ENCODE measurements at regions of chr9 and their contacts with region 1.

Region 1: DNA sequence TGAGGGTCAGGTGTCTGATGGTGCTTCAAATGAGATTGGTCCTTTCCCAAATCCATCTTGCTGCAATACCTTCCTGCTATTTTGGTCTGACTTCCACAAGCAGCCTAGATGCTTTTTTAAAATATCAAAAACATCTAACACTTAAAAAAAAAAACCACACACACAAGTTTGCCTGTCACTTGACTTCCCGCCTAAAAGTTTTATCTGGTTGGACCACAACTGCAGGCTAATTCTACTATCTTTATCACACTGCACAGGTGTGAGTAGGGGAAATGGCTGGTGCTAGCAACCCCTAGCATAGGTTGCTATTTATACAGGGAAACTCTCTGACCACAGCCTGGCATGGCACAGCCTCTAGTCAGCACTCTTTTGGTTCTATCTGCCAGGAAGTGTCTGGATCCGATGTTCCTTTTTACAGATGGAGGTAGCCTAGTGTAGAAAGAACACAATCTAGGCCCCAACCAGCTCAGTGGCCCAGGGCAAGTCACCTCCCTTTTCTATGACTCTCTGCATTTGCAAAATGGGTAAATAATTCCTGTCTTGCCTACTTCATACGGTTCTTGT is at the start of gene HEMGN:
- DNase-seq: no peak
- CTCF ChIP-seq: no peak

Region 2: DNA sequence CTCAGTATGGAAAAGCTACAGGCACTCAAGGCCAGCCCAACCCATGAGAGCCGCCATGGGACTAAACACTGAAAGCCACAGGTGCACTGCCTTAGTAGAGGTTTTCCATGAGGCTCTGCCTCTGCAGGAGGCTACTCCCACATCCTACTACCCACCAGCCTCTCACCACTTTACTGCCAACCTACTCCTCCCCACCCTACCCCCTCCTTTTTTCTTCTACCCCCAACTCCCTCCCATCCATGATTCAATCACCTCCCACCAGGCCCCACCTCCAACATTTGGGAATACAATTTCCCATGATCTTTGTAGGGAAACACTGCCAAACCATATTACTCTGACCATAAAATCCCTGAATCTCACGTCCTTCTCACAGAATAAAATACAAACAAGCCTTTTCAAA is 797.6 kb before region 1 on chr9:
- in situ Hi-C with region 1: no loop called
- DNase-seq: no peak
- CTCF ChIP-seq: no peak

Region 3: GRCh38 chr9:98034593-98035546 is 96.7 kb after region 1 on chr9:
- in situ Hi-C with region 1: no loop called
- DNase-seq: peak; percentile 77
- CTCF ChIP-seq: peak; percentile 87

Region 4: GRCh38 chr9:98255578-98256296 is 317.6 kb after region 1 on chr9 and contains the start of gene TBC1D2:
- in situ Hi-C with region 1: loop called (anchors 25 kb)
- DNase-seq: peak; percentile 96
- CTCF ChIP-seq: peak; percentile 9

Measured in GM13977 (cell line).